Activated naive CD4-positive, alpha-beta T cell treated with anti-CD3 and anti-CD28 coated beads for 36 hours (primary cell): ENCODE measurements at regions of chr20 and their contacts with region 1.

Region 1: GRCh38 chr20:51014797-51015722 is 7.8 kb downstream of the KCNG1 start:
- DNase-seq: peak; percentile 64
- H3K4me3 Mint-ChIP-seq: no peak overlapping the region
- H3K27ac Mint-ChIP-seq: no peak overlapping the region
- H3K4me1 Mint-ChIP-seq: no peaks in the 10 kb centered on the region
- H3K27me3 Mint-ChIP-seq: peaks cover 23% of the 10 kb centered on the region

Region 2: DNA sequence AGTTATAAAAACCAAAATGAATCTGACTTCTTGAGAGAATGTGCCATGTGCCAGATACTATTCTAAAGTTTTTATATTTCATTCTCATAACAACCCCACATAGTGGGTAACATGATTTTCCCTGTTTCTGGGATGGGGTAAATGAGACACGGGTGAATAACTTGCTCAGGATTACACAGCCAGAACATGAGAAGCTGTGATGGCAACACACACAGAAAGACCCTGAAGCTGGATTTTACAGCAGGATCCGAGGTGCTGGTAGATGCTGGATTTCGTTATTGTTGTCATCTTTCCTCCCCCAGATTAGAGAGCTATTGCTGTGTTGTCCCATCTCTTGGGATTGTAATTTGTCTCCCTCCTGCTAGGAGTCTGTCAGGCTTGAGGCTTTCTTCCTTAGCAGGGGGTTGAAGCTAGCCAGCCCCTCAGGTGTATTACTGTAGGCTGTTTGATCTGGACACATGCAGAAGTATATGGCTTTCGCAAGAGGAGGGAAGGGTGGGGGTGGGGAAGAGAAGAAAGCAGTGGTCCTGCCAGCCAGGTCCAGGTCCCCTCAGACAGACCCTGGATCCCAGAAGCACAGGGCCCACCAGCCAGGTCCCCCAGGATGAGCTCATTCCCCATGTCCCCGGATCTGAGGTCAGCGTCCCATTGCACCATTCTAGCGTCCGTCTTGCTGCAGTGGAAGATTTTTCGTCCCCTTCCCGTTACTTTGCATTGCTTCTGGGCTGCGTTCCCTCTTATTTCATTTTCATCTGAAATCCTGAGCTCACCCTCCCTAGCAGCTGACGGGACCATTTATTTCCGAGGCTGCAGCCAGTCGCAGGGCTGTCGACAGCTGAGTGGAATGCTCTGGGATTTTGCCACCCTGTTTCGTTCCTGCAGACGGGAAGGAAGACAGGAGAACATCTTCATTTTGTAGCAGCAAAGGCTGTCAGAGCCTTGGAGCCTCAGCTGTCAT is 15.2 kb after region 1 on chr20:
- CTCF ChIA-PET with region 1: interaction called, 17 read pairs
- intact Hi-C with region 1: no loop called
- DNase-seq: no peak
- H3K4me3 Mint-ChIP-seq: no peak overlapping the region
- H3K27ac Mint-ChIP-seq: no peak overlapping the region
- H3K4me1 Mint-ChIP-seq: peaks cover 6% of the 10 kb centered on the region
- H3K27me3 Mint-ChIP-seq: peaks cover 59% of the 10 kb centered on the region

Region 3: GRCh38 chr20:51190778-51191170 is 175.7 kb after region 1 on chr20:
- CTCF ChIA-PET with region 1: no interaction called
- intact Hi-C with region 1: no loop called
- DNase-seq: no peak
- H3K4me3 Mint-ChIP-seq: no peak overlapping the region
- H3K27ac Mint-ChIP-seq: no peak overlapping the region
- H3K4me1 Mint-ChIP-seq: no peaks in the 10 kb centered on the region
- H3K27me3 Mint-ChIP-seq: peaks cover 9% of the 10 kb centered on the region